Sciatic nerve (tissue), 2 donors: ENCODE measurements at regions of chr12 and their contacts with region 1.

Region 1: GRCh38 chr12:71645268-71645667 is 18.4 kb downstream of the ZFC3H1 start:
- DNase-seq: no peak
- ATAC-seq: no peak

Region 2: GRCh38 chr12:71625476-71625875 is 19.8 kb before region 1 on chr12:
- intact Hi-C with region 1: loop called (anchors 1 kb)
- DNase-seq: no peak
- ATAC-seq: no peak